ENCODE measurements at regions of chr4 and their contacts with region 1.

Region 1: GRCh38 chr4:154779362-154779947 is 1.6 kb upstream of the RBM46 start:
- DNase-seq: peak in 2 of 4 experiments; percentile 14 to 30
- ATAC-seq: 0 out of 3 replicates have a peak, but pooled peaks have one; percentile 54
- H3K4me3 ChIP-seq: no peak overlapping the region
- H3K27ac ChIP-seq: no peak overlapping the region
- H3K4me1 ChIP-seq: peaks cover 0 to 11% of the 10 kb centered on the region in 2 experiments; a peak in 1 of 5 replicates
- H3K27me3 ChIP-seq: peaks cover 0 to 15% of the 10 kb centered on the region in 2 experiments; a peak in 3 of 5 replicates
- CTCF ChIP-seq: peak; percentile 37 to 63 (median 47); a peak in 4 of 6 replicates
- EP300 ChIP-seq: no peak
- POLR2A ChIP-seq: no peak
- RAD21 ChIP-seq: peak; percentile 85 to 86

Region 2: DNA sequence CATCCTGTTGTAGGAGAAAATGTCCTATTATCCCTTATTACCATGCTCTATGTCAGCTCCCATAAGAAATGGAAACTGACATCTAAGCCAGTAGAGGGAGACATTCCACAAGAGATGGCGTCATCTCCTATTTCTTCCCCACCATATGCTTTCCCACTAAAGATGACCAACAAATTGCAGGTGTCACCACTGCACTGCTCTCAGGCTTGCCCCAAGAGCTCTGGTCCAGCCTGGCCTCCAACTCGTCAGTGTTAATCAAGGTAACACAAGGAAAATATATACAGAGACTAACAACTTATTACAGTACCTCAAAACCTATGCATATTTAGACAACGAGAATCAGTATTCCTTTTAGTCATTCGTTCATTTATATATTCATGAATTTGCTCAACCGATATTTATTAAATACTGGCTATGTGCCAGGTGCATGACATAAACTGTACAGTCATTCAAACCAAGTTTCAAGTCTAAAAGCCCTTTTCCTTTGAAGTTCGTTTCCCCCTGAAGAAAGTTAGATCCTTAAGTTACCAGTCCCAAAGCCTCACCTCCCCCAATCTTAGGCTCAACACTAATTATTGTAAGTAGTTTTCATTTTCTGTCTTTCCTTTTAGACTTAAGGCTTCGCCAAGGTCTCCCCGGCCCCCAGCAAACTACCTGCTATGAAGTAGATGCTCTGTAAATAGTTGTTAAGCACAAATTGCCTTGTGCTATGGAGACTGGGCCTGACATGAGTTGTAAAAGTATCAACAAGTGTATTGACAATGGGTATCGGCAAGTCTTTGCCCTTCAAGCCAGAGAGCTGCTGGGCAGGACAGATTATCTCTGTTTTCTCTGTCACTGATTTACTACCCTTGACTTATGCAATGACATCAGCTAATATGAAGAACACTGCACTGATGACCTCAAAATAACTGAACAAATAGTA is 219.7 kb before region 1 on chr4:
- CTCF ChIA-PET with region 1: no interaction called
- POLR2A ChIA-PET with region 1: no interaction called
- in situ Hi-C with region 1: no loop called
- intact Hi-C with region 1: loop called (anchors 2 kb)
- DNase-seq: peak; percentile 48 to 73 (median 50)
- ATAC-seq: peak; percentile 99
- H3K4me3 ChIP-seq: no peak overlapping the region
- H3K27ac ChIP-seq: no peak overlapping the region
- H3K4me1 ChIP-seq: peaks cover 0 to 4% of the 10 kb centered on the region in 2 experiments; a peak in 1 of 5 replicates
- H3K27me3 ChIP-seq: no peaks in the 10 kb centered on the region; a peak in 1 of 5 replicates
- CTCF ChIP-seq: peak; percentile 69 to 88 (median 73)
- EP300 ChIP-seq: no peak
- POLR2A ChIP-seq: no peak
- RAD21 ChIP-seq: peak; percentile 81 to 95

Region 3: GRCh38 chr4:154626793-154627484 is 152.5 kb before region 1 on chr4:
- CTCF ChIA-PET with region 1: interaction called, 7 read pairs
- POLR2A ChIA-PET with region 1: no interaction called
- in situ Hi-C with region 1: loop called (anchors 5 kb)
- intact Hi-C with region 1: no loop called
- DNase-seq: peak; percentile 63 to 77 (median 70)
- ATAC-seq: peak; percentile 100
- H3K4me3 ChIP-seq: no peak overlapping the region
- H3K27ac ChIP-seq: no peak overlapping the region
- H3K4me1 ChIP-seq: peaks cover 0 to 9% of the 10 kb centered on the region in 2 experiments; a peak in 2 of 5 replicates
- H3K27me3 ChIP-seq: peaks cover 2 to 13% of the 10 kb centered on the region in 2 experiments; a peak in 3 of 5 replicates
- CTCF ChIP-seq: peak; percentile 81 to 99 (median 96)
- EP300 ChIP-seq: no peak
- POLR2A ChIP-seq: no peak
- RAD21 ChIP-seq: peak; percentile 56 to 83

Region 4: DNA sequence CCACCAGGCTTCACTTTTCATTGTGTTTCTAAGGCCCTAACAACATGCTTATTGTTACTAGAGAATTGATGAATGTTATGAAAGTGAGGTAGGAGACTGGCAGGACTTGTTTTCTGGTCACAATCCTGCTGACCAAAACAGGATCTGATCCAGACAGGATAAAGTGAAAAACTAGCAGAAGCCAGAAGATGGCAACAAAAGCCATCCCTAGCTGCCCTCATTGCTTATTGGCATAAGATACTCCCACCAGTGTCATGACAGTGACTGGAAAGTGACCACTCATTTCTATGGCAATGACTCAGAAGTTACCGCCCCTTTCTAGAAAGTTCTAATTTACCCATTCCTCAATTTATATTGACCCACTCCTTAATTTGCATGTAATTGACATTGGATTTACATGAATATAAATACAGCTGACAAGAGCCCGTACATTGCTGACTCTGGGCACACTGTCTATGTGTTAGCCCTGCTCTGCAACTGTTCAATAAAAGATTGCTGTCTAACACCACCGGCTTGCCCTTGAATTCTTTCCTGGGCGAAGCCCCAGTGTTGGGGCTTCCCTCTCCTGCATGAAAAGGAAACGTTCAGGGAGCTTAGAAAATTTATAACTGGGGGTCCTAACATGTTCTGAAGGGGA is 137.0 kb before region 1 on chr4:
- CTCF ChIA-PET with region 1: interaction called, 6 read pairs
- POLR2A ChIA-PET with region 1: no interaction called
- in situ Hi-C with region 1: no loop called
- intact Hi-C with region 1: loop called (anchors 2 kb)
- DNase-seq: no peak
- ATAC-seq: no peak
- H3K4me3 ChIP-seq: no peak overlapping the region
- H3K27ac ChIP-seq: no peak overlapping the region
- H3K4me1 ChIP-seq: peaks cover 0 to 8% of the 10 kb centered on the region in 2 experiments; a peak in 2 of 5 replicates
- H3K27me3 ChIP-seq: no peaks in the 10 kb centered on the region; a peak in 1 of 5 replicates
- CTCF ChIP-seq: no peak
- EP300 ChIP-seq: no peak
- POLR2A ChIP-seq: no peak
- RAD21 ChIP-seq: peak in 1 of 2 experiments; percentile 27; a peak in 2 of 4 replicates

Region 5: GRCh38 chr4:154686838-154687237 is 92.6 kb before region 1 on chr4:
- CTCF ChIA-PET with region 1: no interaction called
- POLR2A ChIA-PET with region 1: no interaction called
- in situ Hi-C with region 1: no loop called
- intact Hi-C with region 1: loop called (anchors 2 kb)
- DNase-seq: no peak
- ATAC-seq: no peak
- H3K4me3 ChIP-seq: no peak overlapping the region
- H3K27ac ChIP-seq: no peak overlapping the region
- H3K4me1 ChIP-seq: no peaks in the 10 kb centered on the region
- H3K27me3 ChIP-seq: no peaks in the 10 kb centered on the region
- CTCF ChIP-seq: no peak
- EP300 ChIP-seq: no peak
- POLR2A ChIP-seq: no peak
- RAD21 ChIP-seq: peak in 1 of 2 experiments; percentile 25; a peak in 2 of 4 replicates

Measured in K562 (cell line).